PC-9 (cell line): ENCODE measurements at regions of chr19 and their contacts with region 1.

Region 1: GRCh38 chr19:55173714-55174409 is 6.2 kb downstream of the SYT5 start:
- DNase-seq: peak; percentile 60 to 96
- H3K4me3 ChIP-seq: peak overlapping the region; percentile 88
- H3K27ac ChIP-seq: peak overlapping the region; percentile 23; the same call in 1 of the 2 replicates
- H3K4me1 ChIP-seq: peaks cover 10% of the 10 kb centered on the region; the same call in 1 of the 2 replicates
- H3K27me3 ChIP-seq: no peaks in the 10 kb centered on the region
- CTCF ChIP-seq: no peak; the same call in 1 of the 2 replicates

Region 2: GRCh38 chr19:55160128-55160985 is 13.5 kb before region 1 on chr19:
- CTCF ChIA-PET with region 1: no interaction called
- POLR2A ChIA-PET with region 1: interaction called, 13 read pairs
- intact Hi-C with region 1: no loop called
- DNase-seq: peak; percentile 89 to 98
- H3K4me3 ChIP-seq: no peak overlapping the region
- H3K27ac ChIP-seq: no peak overlapping the region
- H3K4me1 ChIP-seq: peaks cover 21% of the 10 kb centered on the region
- H3K27me3 ChIP-seq: no peaks in the 10 kb centered on the region
- CTCF ChIP-seq: peak; percentile 98

Region 3: GRCh38 chr19:55339048-55339888 is 165.4 kb after region 1 on chr19 and contains the start of gene KMT5C:
- CTCF ChIA-PET with region 1: no interaction called
- POLR2A ChIA-PET with region 1: no interaction called
- intact Hi-C with region 1: no loop called
- DNase-seq: peak; percentile 100
- H3K4me3 ChIP-seq: peak within 1 kb of the TSS; percentile 86
- H3K27ac ChIP-seq: peak within 1 kb of the TSS; percentile 97
- H3K4me1 ChIP-seq: peaks cover 14% of the 10 kb centered on the region
- H3K27me3 ChIP-seq: no peaks in the 10 kb centered on the region
- CTCF ChIP-seq: no peak
- total RNA-seq, gene KMT5C: 71.6 and 80.7 TPM in 2 replicates

Region 4: GRCh38 chr19:55452749-55453346 is 279.0 kb after region 1 on chr19:
- CTCF ChIA-PET with region 1: interaction called, 15 read pairs
- POLR2A ChIA-PET with region 1: no interaction called
- intact Hi-C with region 1: no loop called
- DNase-seq: peak in 1 of 2 experiments; percentile 61
- H3K4me3 ChIP-seq: no peak overlapping the region
- H3K27ac ChIP-seq: no peak overlapping the region
- H3K4me1 ChIP-seq: no peaks in the 10 kb centered on the region
- H3K27me3 ChIP-seq: no peaks in the 10 kb centered on the region
- CTCF ChIP-seq: peak; percentile 38; the same call in 1 of the 2 replicates

Region 5: GRCh38 chr19:55482156-55482961 is 308.5 kb after region 1 on chr19:
- CTCF ChIA-PET with region 1: no interaction called
- POLR2A ChIA-PET with region 1: interaction called, 21 read pairs
- intact Hi-C with region 1: no loop called
- DNase-seq: no peak
- H3K4me3 ChIP-seq: no peak overlapping the region
- H3K27ac ChIP-seq: no peak overlapping the region
- H3K4me1 ChIP-seq: peaks cover 23% of the 10 kb centered on the region
- H3K27me3 ChIP-seq: no peaks in the 10 kb centered on the region
- CTCF ChIP-seq: no peak